HAP-1 (cell line): ENCODE measurements at regions of chr17 and their contacts with region 1.

Region 1: GRCh38 chr17:49556223-49556971 is 19.3 kb upstream of the NXPH3 start:
- DNase-seq: peak; percentile 80 to 90
- H3K4me3 ChIP-seq: no peak overlapping the region
- H3K4me1 ChIP-seq: peaks cover 3% of the 10 kb centered on the region; the same call in 1 of the 2 replicates
- H3K27me3 ChIP-seq: no peaks in the 10 kb centered on the region

Region 2: GRCh38 chr17:49407981-49408501 is 148.4 kb before region 1 on chr17:
- in situ Hi-C with region 1: loop called (anchors 10 kb)
- DNase-seq: peak; percentile 54 to 85
- H3K4me3 ChIP-seq: no peak overlapping the region
- H3K4me1 ChIP-seq: no peaks in the 10 kb centered on the region
- H3K27me3 ChIP-seq: no peaks in the 10 kb centered on the region

Region 3: DNA sequence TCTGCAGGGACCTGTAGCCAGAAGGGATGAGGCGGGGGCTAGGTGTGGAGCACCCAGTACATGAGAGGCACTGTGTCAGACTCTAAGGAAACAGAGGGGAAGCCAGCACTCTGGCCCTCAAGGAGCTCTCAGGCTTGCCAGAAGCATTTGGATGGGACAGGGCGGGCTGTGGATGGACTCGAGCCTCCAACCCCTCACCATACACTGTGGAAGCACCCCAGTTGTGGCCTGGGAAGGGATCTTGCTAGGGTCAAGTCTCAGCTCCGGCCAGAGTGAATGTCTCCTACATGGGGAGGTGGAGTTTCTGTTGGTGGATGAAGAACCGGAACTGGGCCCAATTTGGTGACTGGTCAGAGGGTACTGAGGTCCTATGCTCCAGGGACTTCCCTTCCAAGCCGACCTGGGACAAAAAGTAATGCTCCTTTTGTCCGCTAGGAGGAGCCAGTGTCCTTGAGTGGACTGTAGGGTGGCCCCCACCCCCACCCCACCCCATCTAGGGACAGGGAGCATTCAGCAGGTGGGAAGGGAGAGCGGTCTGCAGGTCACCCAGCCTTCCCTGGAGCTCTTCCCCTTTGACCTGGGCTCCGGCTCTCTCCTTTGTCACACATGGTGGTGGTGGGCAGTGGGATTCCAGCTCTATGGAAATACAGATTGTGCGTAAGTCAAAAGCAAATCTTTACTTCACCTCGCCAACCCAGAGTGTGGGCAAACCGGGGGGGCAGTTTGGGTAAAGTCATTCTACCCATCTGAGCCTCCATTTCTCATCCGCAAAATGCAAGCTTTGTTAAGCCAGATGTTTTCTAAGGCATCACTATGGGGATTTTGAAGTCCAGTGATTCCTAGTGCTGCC is 121.4 kb before region 1 on chr17:
- in situ Hi-C with region 1: loop called (anchors 10 kb)
- DNase-seq: peak; percentile 31 to 80
- H3K4me3 ChIP-seq: no peak overlapping the region
- H3K4me1 ChIP-seq: no peaks in the 10 kb centered on the region
- H3K27me3 ChIP-seq: peaks cover 8% of the 10 kb centered on the region; the same call in 1 of the 2 replicates

Region 4: GRCh38 chr17:49616601-49617131 is 60.3 kb after region 1 on chr17:
- in situ Hi-C with region 1: no loop called
- DNase-seq: no peak
- H3K4me3 ChIP-seq: no peak overlapping the region
- H3K4me1 ChIP-seq: no peaks in the 10 kb centered on the region
- H3K27me3 ChIP-seq: no peaks in the 10 kb centered on the region

Region 5: GRCh38 chr17:49730078-49730784 is 173.8 kb after region 1 on chr17:
- in situ Hi-C with region 1: no loop called
- DNase-seq: no peak
- H3K4me3 ChIP-seq: no peak overlapping the region
- H3K4me1 ChIP-seq: no peaks in the 10 kb centered on the region
- H3K27me3 ChIP-seq: no peaks in the 10 kb centered on the region